Right ventricle myocardium inferior (tissue), 1 donor: ENCODE measurements at regions of chr16 and their contacts with region 1.

Region 1: GRCh38 chr16:86751076-86752030 is 173.0 kb downstream of the FOXL1 start:
- DNase-seq: no peak
- ATAC-seq: no peak

Region 2: GRCh38 chr16:86664533-86665318 is 86.6 kb before region 1 on chr16:
- intact Hi-C with region 1: loop called (anchors 5 kb)
- DNase-seq: no peak
- ATAC-seq: no peak

Region 3: DNA sequence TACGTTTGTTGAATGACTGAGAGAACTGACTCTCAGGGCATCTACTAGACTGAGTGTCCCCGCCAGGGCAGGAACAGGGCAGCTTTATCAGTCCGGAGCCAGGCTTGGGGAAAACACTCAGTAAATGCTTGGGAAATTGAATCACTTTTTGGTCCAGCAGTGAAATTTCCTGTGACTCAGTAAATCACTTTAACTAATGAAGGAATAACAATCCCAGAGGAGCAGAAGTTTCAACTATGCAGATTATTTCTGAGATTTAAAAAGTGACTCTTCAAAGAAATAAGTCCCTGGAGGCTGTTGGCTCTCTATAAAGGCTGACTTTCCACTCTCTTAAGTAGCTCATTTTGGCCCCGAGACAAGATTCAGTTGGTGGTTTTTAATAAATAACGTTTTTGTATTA is 71.2 kb before region 1 on chr16:
- intact Hi-C with region 1: loop called (anchors 5 kb)
- DNase-seq: no peak
- ATAC-seq: peak; percentile 69

Region 4: DNA sequence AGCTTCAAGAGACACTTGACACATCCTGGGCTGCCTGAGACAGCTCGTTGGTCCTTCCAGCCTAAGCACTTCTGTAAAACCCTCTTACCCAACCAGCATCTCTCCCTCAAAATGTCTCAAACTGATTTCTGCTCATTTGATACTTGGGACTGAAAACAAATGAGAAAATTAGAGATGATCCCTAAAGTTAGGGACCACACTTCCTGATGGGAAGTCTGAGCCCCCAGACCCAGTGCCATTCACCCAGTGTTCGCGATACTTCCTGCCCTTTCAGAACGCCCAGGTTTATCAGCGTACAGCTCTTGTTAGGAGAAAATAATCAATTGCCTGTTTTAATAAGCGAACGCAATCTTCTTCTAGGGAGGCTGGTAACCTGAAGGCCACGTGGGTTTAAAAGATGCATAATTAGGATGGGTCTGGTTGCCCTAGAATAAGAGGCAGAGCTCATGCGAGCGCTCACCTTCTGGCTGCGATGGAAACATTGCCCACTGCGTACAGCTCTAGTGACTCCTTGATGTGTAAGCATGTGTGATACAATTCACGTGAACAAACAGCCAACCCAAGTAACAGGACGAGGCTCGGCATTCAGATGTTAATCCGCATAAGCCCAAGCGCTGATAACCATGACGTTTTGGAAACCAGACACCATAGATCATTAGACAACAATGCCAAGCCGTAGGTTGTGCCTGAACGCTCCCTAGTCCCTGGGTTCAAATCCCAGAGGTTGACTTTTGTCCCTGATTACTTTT is 40.1 kb after region 1 on chr16:
- intact Hi-C with region 1: loop called (anchors 2 kb)
- DNase-seq: no peak
- ATAC-seq: no peak

Region 5: DNA sequence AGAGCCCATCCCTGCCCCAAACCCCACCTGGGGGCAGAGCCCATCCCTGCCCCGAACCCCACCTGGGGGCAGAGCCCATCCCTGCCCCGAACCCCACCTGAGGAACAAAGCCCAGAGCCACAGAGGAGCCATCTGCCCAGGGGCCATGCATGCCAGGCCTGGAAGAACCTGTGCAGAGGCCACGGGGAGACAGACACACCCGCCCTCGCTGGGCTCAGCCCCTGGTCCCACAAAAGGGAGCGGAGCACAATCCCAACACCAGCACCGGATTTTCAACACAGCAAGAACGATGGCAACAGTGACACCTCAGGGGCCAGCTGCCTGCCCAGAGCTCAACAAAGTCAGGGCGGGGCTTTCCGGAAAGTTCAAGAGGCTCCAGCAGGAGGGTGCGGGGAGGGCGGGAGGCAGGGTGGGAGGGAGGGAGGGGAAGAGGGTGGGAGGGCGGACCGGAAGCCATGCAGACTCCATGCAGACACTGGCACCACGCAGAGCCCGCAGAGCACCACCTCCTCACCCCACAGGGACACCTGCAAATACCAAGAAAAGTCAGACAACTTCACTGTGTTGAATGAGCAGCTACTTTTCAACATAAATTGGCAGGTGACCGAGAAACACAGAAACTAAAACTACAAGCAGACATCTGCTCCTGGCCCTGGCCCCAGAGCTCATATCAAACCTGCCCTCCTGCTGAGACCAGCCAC is 593.7 kb after region 1 on chr16:
- intact Hi-C with region 1: no loop called
- DNase-seq: peak; percentile 39
- ATAC-seq: no peak